ENCODE measurements at regions of chr7 and their contacts with region 1.

Region 1: DNA sequence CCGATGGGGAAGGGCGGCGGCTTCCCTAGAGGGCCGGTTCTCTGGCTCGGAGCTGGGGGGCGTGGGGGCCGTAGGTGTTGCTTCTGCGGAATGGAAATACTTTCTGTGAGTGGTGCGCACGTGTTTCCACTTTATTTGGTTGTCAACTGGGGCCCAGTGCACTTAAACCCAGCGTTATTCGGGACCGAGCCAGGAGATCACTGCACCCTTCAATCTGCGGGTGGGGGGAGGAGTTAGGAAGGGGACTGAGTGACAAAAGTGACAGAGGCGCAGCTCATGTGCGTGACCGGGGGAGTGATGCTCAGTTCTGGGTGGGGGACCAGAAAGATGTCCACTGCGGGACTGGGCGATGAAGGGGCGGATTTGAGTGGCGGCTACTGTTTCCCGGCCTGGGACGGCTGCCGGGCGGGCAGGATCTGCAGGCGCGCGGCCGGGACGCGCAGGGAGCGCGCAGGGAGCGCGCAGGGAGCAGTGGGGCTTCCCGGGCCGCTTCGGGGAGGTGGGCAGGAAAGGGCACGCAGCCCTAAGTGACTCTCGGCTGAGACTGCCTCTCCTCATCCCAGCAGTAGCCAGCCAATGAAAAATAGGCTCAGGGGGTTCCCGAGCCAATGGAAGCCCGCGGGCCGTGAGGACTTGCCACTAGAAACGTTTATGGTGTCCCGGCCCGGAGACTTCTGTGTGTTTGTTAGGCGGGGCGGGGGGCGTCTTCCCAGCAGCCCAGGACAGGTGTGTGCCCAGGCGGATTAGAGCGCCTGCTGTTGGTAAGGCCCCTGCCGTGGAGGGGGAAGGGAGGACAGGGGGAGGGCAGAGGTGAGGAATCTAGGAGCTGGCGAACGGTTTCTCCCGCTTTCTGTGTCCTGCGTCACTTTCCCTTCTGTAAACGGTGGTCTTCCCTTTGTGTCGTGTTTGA is 54.3 kb upstream of the KDM7A start:
- DNase-seq: peak; percentile 87
- ATAC-seq: peak; percentile 62
- H3K4me3 Mint-ChIP-seq: peak overlapping the region; percentile 83
- H3K27ac Mint-ChIP-seq: peak overlapping the region; percentile 98
- H3K4me1 Mint-ChIP-seq: peaks cover 30% of the 10 kb centered on the region
- H3K27me3 Mint-ChIP-seq: no peaks in the 10 kb centered on the region
- CTCF ChIP-seq: no peak

Region 2: DNA sequence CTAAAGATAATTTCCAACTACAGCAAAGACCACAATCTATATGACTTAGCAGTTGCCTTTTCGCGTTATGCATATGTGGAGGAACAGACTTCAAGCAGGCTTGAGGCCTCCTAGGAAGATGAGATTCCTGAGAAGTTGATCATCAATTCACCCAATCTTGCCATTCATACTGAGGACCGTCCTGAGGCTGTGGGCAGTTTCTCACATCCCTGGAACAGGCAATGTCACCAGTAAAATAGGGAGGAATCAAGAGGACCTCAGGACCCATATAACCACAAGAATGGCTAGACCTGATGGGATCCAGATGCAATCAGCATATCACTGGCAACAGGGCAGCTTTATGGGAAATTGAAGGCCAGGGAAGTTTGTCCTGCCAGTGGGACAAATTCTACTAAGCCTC is 71.6 kb before region 1 on chr7:
- CTCF ChIA-PET with region 1: no interaction called
- POLR2A ChIA-PET with region 1: no interaction called
- intact Hi-C with region 1: no loop called
- DNase-seq: no peak
- ATAC-seq: no peak
- H3K4me3 Mint-ChIP-seq: no peak overlapping the region
- H3K27ac Mint-ChIP-seq: no peak overlapping the region
- H3K4me1 Mint-ChIP-seq: peaks cover 70% of the 10 kb centered on the region
- H3K27me3 Mint-ChIP-seq: no peaks in the 10 kb centered on the region
- CTCF ChIP-seq: no peak

Region 3: DNA sequence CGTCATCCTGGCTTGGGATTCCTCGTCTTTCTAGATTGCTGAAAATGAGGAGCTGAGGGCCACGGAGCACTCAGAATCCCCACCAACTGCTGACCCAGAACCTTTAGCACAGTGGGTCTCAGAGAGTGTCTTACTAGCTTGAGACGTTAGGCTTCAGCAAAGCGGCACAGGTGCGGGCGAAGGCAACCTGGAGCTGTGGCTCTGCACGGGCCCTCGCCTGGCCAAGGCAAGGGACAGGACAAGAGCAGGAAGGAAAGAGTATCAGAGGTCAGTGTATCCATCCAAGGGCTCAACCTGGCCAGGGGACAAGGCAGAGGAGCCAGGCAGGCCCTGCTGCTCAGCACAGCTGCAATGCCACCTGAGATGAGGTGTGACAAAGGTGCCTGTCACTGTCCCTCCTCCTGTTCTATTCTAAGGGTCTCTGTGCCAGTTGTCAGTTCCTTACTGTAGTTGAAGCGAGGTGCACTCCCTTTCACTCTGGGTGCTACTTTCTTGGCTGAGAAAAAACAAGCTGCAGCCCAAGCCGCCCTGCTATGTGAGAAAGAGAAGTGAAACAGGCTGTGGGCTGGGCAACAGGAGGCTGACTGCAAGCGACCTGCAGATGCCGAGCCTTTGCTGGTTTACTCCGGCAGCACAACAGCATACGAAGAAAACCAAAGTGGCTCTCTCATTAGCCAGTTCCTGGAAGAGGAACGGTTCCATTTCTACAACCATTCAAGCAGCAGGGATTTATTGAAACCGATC is 21.1 kb before region 1 on chr7:
- CTCF ChIA-PET with region 1: no interaction called
- POLR2A ChIA-PET with region 1: interaction called, 24 read pairs
- intact Hi-C with region 1: no loop called
- DNase-seq: peak; percentile 80
- ATAC-seq: peak; percentile 79
- H3K4me3 Mint-ChIP-seq: peak overlapping the region; percentile 27
- H3K27ac Mint-ChIP-seq: peak overlapping the region; percentile 58
- H3K4me1 Mint-ChIP-seq: peaks cover 54% of the 10 kb centered on the region
- H3K27me3 Mint-ChIP-seq: no peaks in the 10 kb centered on the region
- CTCF ChIP-seq: no peak

Measured in activated CD8-positive, alpha-beta T cell treated with anti-CD3 and anti-CD28 coated beads for 36 hours (primary cell).